ENCODE measurements at regions of chr12 and their contacts with region 1.

Region 1: DNA sequence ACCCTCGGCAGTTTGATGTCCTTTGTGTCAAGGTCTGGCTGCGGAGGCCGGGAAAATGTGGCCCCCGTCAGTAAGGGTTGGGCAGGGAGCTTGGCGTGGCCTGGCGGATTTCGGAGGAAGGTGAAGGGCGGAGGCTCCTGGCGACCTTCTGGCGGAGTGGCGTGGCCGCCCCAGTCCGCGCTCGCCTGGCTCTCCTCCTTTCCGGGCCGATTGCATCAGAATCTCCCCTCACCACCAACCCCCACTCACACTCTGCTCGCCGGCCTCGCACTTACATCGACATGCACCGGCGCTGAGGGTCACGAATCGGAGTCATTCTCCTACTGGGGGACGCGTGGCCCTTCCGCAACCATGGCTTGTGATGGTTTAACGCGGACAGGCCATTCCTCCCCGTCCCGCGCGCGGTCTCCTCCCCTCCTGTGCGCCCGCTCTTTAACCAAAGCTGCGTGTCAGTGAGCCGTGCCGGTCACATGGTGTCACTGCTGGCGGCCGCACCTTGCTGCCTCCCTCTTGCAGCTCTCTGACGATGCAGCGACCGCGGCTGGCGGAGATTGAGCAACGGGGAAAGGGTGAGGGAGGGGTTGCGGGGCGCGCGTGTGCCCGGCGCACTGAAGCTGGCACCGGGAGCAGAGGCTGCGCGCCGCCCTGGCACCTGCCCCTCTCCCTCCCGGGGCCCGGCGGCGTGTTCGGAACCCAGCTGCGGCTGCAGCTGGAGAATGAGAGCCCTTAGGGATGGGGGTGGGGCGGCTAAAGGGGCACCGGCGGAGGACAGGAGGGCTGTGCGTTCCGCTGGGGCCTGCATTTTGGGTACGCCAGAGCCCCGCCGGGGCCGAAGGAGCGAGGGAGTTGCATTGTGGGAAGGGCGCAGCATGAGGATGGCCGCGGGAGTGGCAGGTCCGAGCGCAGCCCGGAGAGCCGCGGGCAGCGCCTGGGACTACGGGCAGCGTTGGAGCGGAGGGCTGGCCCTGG is at the start of gene SLC38A1:
- DNase-seq: peak; percentile 85 to 95
- ATAC-seq: peak; percentile 61 to 81 (median 78)
- H3K4me3 ChIP-seq: peak within 1 kb of the TSS; percentile 74
- H3K4me3 Mint-ChIP-seq: no peak within 1 kb of the TSS
- H3K27ac ChIP-seq: peak within 1 kb of the TSS; percentile 94
- H3K27ac Mint-ChIP-seq: no peak within 1 kb of the TSS
- H3K4me1 ChIP-seq: peaks cover 23% of the 10 kb centered on the region
- H3K4me1 Mint-ChIP-seq: peaks cover 11 to 17% of the 10 kb centered on the region in 2 donors
- H3K27me3 ChIP-seq: no peaks in the 10 kb centered on the region
- H3K27me3 Mint-ChIP-seq: no peaks in the 10 kb centered on the region
- CTCF ChIP-seq: no peak
- total RNA-seq, gene SLC38A1: 295 to 385 (median 354) TPM

Region 2: DNA sequence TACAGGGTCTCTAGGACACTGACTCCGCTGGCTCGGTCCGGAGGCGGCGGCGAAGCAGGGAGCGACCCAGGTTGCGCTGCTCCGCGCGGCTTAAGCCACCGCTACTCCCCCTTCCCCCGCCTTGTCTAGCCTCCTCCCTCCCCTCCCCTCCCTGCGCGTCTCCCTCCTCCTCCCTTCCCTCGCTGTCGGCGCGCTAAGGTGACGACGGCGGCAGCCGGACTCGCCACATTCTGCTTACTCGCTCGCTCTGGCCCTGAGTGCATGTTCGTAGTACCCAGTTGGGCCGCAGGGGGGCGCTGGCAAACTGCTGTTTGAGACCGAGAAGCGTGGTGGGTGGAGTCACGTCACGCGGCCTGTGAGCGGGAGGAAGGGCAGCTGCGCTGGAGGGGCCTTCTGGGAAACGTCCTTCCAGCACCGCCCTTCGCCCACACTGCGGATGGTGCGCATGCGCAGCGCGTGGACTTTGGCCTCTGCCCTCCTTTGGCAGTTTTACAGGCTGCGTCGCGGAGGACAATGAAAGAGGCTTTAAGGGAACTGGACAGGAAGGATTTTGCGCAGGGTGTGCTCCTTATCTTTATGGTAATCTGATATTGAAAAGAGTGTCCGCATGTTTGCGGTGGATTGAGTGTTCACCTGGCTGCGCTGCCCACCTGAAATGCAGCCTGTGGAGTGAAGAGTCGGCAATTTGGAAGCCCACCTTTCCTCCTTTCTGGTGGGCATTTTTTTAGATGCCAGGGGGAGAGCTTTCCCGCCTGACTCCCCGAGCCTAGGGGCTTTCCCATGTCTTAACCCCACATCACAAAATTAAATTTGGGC is 278.2 kb before region 1 on chr12 and contains the start of gene SCAF11:
- intact Hi-C with region 1: loop called (anchors 2 kb)
- DNase-seq: peak; percentile 100
- ATAC-seq: peak; percentile 83 to 96 (median 85)
- H3K4me3 ChIP-seq: peak within 1 kb of the TSS; percentile 69
- H3K4me3 Mint-ChIP-seq: peak within 1 kb of the TSS; percentile 96
- H3K27ac ChIP-seq: peak within 1 kb of the TSS; percentile 89
- H3K27ac Mint-ChIP-seq: peak within 1 kb of the TSS; percentile 98
- H3K4me1 ChIP-seq: peaks cover 12% of the 10 kb centered on the region
- H3K4me1 Mint-ChIP-seq: peaks cover 49 to 52% of the 10 kb centered on the region in 2 donors
- H3K27me3 ChIP-seq: no peaks in the 10 kb centered on the region
- H3K27me3 Mint-ChIP-seq: peaks cover 0 to 2% of the 10 kb centered on the region in 2 donors
- CTCF ChIP-seq: peak; percentile 78
- total RNA-seq, gene SCAF11: 208 to 232 (median 220) TPM

Region 3: DNA sequence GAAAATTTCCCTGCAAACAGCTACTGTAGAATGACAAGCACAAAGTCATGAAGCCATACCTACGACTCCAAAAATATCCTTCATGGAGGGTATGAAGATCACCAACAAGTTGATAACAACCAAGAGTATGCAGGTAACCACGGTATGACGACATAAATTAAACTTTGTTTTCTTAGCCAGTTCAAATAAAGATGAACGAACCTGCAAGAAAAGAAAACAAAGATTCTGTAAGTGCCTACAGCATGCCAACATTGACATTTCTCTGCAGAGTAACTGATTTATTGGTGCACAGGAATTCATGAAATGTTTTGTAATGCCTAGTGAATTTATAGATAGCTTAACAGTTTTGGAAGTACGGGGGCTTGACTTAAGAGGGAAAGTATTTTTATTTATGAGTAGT is 71.0 kb before region 1 on chr12:
- intact Hi-C with region 1: no loop called
- DNase-seq: no peak
- ATAC-seq: no peak
- H3K4me3 ChIP-seq: no peak overlapping the region
- H3K4me3 Mint-ChIP-seq: no peak overlapping the region
- H3K27ac ChIP-seq: no peak overlapping the region
- H3K27ac Mint-ChIP-seq: peak overlapping the region; percentile 9 to 53
- H3K4me1 ChIP-seq: no peaks in the 10 kb centered on the region
- H3K4me1 Mint-ChIP-seq: peaks cover 12 to 23% of the 10 kb centered on the region in 2 donors
- H3K27me3 ChIP-seq: no peaks in the 10 kb centered on the region
- H3K27me3 Mint-ChIP-seq: no peaks in the 10 kb centered on the region
- CTCF ChIP-seq: no peak

Region 4: DNA sequence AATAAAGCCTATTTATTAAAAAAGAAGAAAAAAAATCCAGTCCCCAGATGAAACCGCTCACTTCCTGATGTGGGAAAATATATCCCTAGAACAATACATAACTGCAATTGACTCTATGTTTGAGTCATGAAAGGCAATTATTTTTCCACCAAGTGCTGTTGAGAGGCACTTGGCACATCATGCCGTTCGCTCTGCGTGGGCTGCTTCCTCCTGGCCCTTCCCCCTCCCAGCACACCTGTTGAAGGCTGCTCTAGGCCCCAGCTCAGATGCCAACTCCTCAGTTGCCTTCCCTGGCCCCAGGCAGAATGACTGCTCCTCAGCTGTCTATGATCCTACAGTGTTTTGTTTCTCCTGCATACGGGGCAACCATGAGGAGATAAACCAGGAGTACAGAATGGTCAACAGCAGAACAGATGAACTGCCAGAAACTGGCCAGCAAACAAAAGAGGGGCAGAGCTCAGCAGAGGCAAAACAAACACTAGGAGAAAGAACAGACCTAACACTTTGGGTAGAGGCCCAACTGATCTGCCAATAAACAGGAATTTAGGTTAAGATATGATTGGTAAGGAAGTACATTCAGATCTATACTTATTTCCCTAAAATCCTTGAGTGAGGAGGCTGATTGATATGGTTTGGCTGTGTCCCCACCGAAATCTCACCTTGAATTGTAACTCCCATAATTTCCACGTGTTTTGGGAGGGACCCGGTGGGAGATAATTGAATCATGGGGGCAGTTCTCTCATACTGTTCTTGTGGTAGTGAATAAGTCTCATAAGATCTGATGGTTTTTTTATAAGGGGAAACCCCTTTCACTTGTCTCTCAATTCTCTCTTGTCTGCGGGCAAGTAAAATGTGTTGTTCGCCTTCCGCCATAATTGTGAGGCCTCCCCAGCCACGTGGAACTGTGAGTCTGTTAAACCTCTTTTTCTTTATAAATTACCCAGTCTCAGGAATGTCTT is 58.7 kb before region 1 on chr12:
- intact Hi-C with region 1: loop called (anchors 1 kb)
- DNase-seq: peak in 1 of 2 donors; percentile 79
- ATAC-seq: peak in 2 of 3 donors; percentile 21 to 38
- H3K4me3 ChIP-seq: no peak overlapping the region
- H3K4me3 Mint-ChIP-seq: peak overlapping the region; percentile 33
- H3K27ac ChIP-seq: peak overlapping the region; percentile 80
- H3K27ac Mint-ChIP-seq: peak overlapping the region; percentile 97 to 98
- H3K4me1 ChIP-seq: peaks cover 30% of the 10 kb centered on the region
- H3K4me1 Mint-ChIP-seq: peaks cover 63 to 76% of the 10 kb centered on the region in 2 donors
- H3K27me3 ChIP-seq: no peaks in the 10 kb centered on the region
- H3K27me3 Mint-ChIP-seq: no peaks in the 10 kb centered on the region
- CTCF ChIP-seq: no peak

Region 5: GRCh38 chr12:46217541-46218321 is 51.1 kb before region 1 on chr12:
- intact Hi-C with region 1: loop called (anchors 1 kb)
- DNase-seq: peak; percentile 57 to 85
- ATAC-seq: peak; percentile 11 to 55 (median 32)
- H3K4me3 ChIP-seq: peak overlapping the region; percentile 8
- H3K4me3 Mint-ChIP-seq: peak overlapping the region; percentile 85
- H3K27ac ChIP-seq: peak overlapping the region; percentile 87
- H3K27ac Mint-ChIP-seq: peak overlapping the region; percentile 97 to 98
- H3K4me1 ChIP-seq: peaks cover 54% of the 10 kb centered on the region
- H3K4me1 Mint-ChIP-seq: peaks cover 90 to 97% of the 10 kb centered on the region in 2 donors
- H3K27me3 ChIP-seq: no peaks in the 10 kb centered on the region
- H3K27me3 Mint-ChIP-seq: no peaks in the 10 kb centered on the region
- CTCF ChIP-seq: no peak

Region 6: DNA sequence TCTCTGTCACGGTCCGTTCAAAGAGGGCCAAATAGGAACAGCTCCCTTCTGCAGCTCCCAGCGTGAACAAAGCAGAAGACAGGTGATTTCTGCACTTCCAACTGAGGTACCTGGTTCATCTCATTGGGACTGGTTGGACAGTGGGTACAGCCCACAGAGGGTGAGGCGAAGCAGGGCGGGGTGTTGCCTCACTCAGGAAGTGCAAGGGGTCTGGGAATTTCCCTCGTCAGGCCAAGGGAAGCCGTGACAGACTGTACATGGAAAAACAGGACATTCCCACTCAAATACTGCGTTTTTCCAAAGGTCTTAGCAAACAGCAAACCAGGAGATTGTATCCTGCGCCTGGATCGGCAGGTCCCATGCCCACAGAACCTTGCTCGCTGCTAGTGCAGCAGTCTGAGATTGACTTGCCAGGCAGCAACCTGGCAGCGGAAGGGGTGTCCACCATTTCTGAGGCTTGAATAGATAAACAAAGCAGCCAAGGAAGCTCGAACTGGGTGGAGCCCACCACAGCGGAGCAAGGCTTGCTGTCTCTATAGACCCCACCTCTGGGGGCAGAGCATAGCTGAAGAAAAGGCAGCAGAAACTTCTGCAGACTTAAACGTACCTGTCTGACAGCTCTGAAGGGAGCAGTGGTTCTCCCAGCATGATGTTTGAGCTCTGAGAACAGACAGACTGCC is 22.7 kb before region 1 on chr12:
- intact Hi-C with region 1: no loop called
- DNase-seq: peak in 1 of 2 donors; percentile 64
- ATAC-seq: peak in 2 of 3 donors; percentile 22 to 38
- H3K4me3 ChIP-seq: no peak overlapping the region
- H3K4me3 Mint-ChIP-seq: peak overlapping the region; percentile 32
- H3K27ac ChIP-seq: peak overlapping the region; percentile 28
- H3K27ac Mint-ChIP-seq: peak overlapping the region; percentile 62 to 68
- H3K4me1 ChIP-seq: peaks cover 16% of the 10 kb centered on the region
- H3K4me1 Mint-ChIP-seq: peaks cover 81 to 93% of the 10 kb centered on the region in 2 donors
- H3K27me3 ChIP-seq: no peaks in the 10 kb centered on the region
- H3K27me3 Mint-ChIP-seq: no peaks in the 10 kb centered on the region
- CTCF ChIP-seq: no peak

Region 7: GRCh38 chr12:46661110-46661845 is 392.4 kb after region 1 on chr12:
- intact Hi-C with region 1: loop called (anchors 5 kb)
- DNase-seq: peak in 1 of 2 donors; percentile 70
- ATAC-seq: peak; percentile 64 to 73 (median 73)
- H3K4me3 ChIP-seq: no peak overlapping the region
- H3K4me3 Mint-ChIP-seq: peak overlapping the region; percentile 56
- H3K27ac ChIP-seq: peak overlapping the region; percentile 35
- H3K27ac Mint-ChIP-seq: peak overlapping the region; percentile 55 to 83
- H3K4me1 ChIP-seq: peaks cover 3% of the 10 kb centered on the region
- H3K4me1 Mint-ChIP-seq: peaks cover 46% of the 10 kb centered on the region in 2 donors
- H3K27me3 ChIP-seq: no peaks in the 10 kb centered on the region
- H3K27me3 Mint-ChIP-seq: no peaks in the 10 kb centered on the region
- CTCF ChIP-seq: peak; percentile 62

Region 8: DNA sequence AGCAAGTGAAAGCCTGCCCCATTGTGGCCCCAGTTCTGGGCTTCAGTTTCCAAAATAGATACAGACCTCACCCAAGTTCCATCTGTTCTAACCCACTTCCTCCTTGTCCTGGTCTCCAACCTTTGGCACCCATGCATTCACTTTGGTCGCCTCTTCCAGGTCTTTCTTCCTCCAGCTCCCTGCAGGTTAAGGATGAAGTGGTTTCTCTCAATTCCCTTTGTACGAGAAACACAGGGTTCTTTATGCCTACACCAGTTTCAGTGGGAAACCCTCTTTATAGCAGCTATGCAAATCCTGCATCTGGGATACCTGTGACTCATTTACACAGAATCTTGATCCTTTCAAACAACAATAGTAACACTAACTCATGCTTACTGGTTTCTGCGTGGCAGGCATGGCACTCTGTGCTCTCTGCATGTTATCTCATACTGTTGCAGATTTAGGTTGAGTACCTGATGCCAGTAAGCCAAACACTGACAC is 921.4 kb after region 1 on chr12:
- intact Hi-C with region 1: loop called (anchors 5 kb)
- DNase-seq: no peak
- ATAC-seq: no peak
- H3K4me3 ChIP-seq: no peak overlapping the region
- H3K4me3 Mint-ChIP-seq: peak overlapping the region; percentile 95
- H3K27ac ChIP-seq: no peak overlapping the region
- H3K27ac Mint-ChIP-seq: peak overlapping the region; percentile 97 to 98
- H3K4me1 ChIP-seq: peaks cover 46% of the 10 kb centered on the region
- H3K4me1 Mint-ChIP-seq: peaks cover 78% of the 10 kb centered on the region in 2 donors
- H3K27me3 ChIP-seq: no peaks in the 10 kb centered on the region
- H3K27me3 Mint-ChIP-seq: no peaks in the 10 kb centered on the region
- CTCF ChIP-seq: no peak

Measured in natural killer cell (primary cell).